Transverse colon (tissue), 4 donors: ENCODE measurements at regions of chr7 and their contacts with region 1.

Region 1: GRCh38 chr7:55939514-55940123 is 12.1 kb upstream of the MRPS17 start:
- DNase-seq: no peak
- H3K4me3 ChIP-seq: no peak overlapping the region
- H3K27ac ChIP-seq: no peak overlapping the region
- H3K4me1 ChIP-seq: no peaks in the 10 kb centered on the region
- H3K27me3 ChIP-seq: no peaks in the 10 kb centered on the region
- CTCF ChIP-seq: no peak
- EP300 ChIP-seq: no peak
- POLR2A ChIP-seq: no peak

Region 2: GRCh38 chr7:55917771-55918170 is 21.8 kb before region 1 on chr7:
- in situ Hi-C with region 1: no loop called
- intact Hi-C with region 1: loop called (anchors 1 kb)
- DNase-seq: no peak
- H3K4me3 ChIP-seq: no peak overlapping the region
- H3K27ac ChIP-seq: no peak overlapping the region
- H3K4me1 ChIP-seq: no peaks in the 10 kb centered on the region
- H3K27me3 ChIP-seq: no peaks in the 10 kb centered on the region
- CTCF ChIP-seq: no peak
- EP300 ChIP-seq: no peak
- POLR2A ChIP-seq: no peak

Region 3: GRCh38 chr7:55962014-55962413 is 22.4 kb after region 1 on chr7:
- in situ Hi-C with region 1: no loop called
- intact Hi-C with region 1: no loop called
- DNase-seq: no peak
- H3K4me3 ChIP-seq: no peak overlapping the region
- H3K27ac ChIP-seq: no peak overlapping the region
- H3K4me1 ChIP-seq: peaks cover 4 to 28% (median 14%) of the 10 kb centered on the region in 4 donors
- H3K27me3 ChIP-seq: no peaks in the 10 kb centered on the region
- CTCF ChIP-seq: no peak
- EP300 ChIP-seq: no peak
- POLR2A ChIP-seq: no peak

Region 4: DNA sequence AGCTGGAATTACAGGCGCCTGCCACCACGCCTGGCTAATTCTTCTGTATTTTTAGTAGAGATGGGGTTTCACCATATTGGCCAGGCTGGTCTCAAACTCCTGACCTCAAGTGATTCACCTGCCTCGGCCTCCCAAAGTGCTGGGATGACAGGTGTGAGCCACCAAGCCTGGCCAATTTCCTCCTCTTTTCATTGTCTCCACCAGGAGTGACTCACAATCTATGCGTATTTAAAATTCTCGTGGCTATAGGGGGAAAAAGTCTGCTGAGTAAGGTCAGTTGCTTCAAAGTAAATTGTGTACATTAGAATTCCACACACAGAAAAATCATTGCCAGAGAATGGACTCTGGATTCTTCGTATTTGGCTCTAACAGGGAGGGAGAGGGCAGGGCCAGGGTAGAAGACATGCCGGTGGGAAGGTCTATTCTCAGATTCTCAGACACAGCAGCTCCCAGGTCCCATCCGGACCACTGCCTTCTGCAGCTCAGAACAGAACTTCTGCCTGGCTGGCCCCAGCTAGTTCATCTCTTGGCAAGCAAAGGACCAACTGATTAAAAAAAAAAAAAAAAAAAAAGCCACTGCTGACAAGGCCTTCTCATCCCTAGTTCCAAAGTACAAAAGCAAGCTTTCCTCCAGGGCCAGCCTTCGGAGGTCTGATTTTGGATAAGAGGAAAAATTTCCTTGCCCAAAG is 89.5 kb after region 1 on chr7:
- in situ Hi-C with region 1: no loop called
- intact Hi-C with region 1: no loop called
- DNase-seq: no peak
- H3K4me3 ChIP-seq: no peak overlapping the region
- H3K27ac ChIP-seq: peak overlapping the region in 2 of 4 donors; percentile 51 to 56
- H3K4me1 ChIP-seq: peaks cover 0 to 18% (median 8%) of the 10 kb centered on the region in 4 donors
- H3K27me3 ChIP-seq: no peaks in the 10 kb centered on the region
- CTCF ChIP-seq: no peak
- EP300 ChIP-seq: no peak
- POLR2A ChIP-seq: no peak

Region 5: DNA sequence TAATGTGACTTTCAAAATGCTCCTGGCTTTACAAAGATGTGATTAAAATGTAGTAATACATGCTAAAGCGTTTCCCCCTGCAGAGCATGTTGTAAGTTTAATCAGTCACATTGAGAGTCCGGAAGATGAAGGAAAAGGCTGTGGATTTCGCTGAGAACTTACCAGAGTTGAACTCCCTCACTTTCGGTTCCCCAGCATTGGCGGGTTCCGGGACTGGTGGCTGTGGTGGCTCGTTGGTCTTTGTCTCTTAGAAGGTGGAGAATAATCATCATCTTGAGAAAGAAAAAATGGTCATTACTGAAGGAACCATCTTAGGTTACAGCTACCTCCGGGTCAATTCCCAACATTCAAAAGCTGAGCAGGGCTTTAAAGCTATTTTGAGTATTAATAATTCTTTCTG is 186.2 kb after region 1 on chr7:
- in situ Hi-C with region 1: no loop called
- intact Hi-C with region 1: no loop called
- DNase-seq: no peak
- H3K4me3 ChIP-seq: no peak overlapping the region
- H3K27ac ChIP-seq: no peak overlapping the region
- H3K4me1 ChIP-seq: no peaks in the 10 kb centered on the region
- H3K27me3 ChIP-seq: no peaks in the 10 kb centered on the region
- CTCF ChIP-seq: no peak
- EP300 ChIP-seq: no peak
- POLR2A ChIP-seq: no peak